ENCODE measurements at regions of chr1 and their contacts with region 1.

Region 1: GRCh38 chr1:21189906-21190500 is 13.3 kb upstream of the EIF4G3 start:
- DNase-seq: no peak
- ATAC-seq: no peak
- H3K4me3 Mint-ChIP-seq: no peak overlapping the region
- H3K27ac Mint-ChIP-seq: no peak overlapping the region
- H3K4me1 Mint-ChIP-seq: peaks cover under 1% of the 10 kb centered on the region
- H3K27me3 Mint-ChIP-seq: peaks cover 17% of the 10 kb centered on the region

Region 2: DNA sequence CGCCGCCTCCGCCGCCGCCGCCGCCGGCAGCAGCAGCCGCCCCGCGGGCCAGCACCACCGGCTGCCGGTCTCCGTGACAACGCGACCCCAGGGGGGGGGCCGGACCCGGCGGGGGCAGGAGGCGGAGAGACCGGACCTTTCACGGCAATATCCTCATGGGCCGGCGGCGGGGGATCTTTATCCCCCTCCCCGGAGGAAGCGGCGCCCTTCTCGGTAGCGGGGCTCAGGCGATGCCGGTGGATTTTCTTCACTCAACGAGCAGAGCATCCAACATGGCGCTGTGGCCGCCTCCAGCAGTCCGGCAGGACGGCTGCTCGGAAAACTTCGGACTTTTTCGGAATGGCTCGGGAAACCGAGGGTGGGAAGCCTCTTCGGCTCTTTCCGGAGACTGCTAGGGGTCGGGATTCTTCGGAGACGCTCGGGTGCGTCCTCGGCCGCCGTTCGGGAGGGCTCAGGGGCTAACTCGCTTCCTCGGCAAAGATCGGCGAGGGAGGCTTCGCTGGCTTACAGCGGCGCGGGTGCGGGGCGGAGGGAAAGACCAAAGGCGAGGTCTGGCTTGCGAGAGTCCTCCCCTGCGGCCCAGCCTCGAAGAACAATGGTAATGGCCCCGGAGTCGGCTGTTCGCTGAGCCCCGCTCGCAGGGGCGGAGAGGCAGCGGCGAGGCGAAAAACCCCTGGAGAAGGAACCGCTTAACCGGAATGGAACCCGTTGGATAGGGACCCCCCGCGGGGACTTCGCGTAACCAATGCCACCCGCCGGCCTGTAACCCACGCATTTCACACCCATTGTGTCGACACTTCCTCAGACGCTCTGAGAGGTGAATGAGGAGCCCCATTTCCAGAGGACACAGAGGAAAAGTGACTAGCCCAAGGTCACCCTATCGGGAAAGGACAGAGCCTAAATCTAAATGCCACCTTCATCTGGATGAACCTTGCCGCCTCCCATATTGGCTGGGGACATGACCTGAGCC is 13.1 kb before region 1 on chr1 and contains the start of gene EIF4G3:
- CTCF ChIA-PET with region 1: interaction called, 16 read pairs
- POLR2A ChIA-PET with region 1: no interaction called
- DNase-seq: peak; percentile 100
- ATAC-seq: peak; percentile 97
- H3K4me3 Mint-ChIP-seq: peak within 1 kb of the TSS; percentile 82
- H3K27ac Mint-ChIP-seq: peak within 1 kb of the TSS; percentile 90
- H3K4me1 Mint-ChIP-seq: peaks cover 30% of the 10 kb centered on the region
- H3K27me3 Mint-ChIP-seq: peaks cover 5% of the 10 kb centered on the region
- total RNA-seq, gene EIF4G3: 37.9 to 41.2 TPM

Region 3: GRCh38 chr1:21225065-21225464 is 35.1 kb after region 1 on chr1:
- CTCF ChIA-PET with region 1: no interaction called
- POLR2A ChIA-PET with region 1: no interaction called
- DNase-seq: no peak
- ATAC-seq: no peak
- H3K4me3 Mint-ChIP-seq: no peak overlapping the region
- H3K27ac Mint-ChIP-seq: no peak overlapping the region
- H3K4me1 Mint-ChIP-seq: no peaks in the 10 kb centered on the region
- H3K27me3 Mint-ChIP-seq: no peaks in the 10 kb centered on the region

Measured in activated CD8-positive, alpha-beta T cell treated with anti-CD3 and anti-CD28 coated beads, Interleukin-2, amount 10 ng/mL, durations not matched to agents 7 days and 5 days (primary cell).